Aorta (tissue), 5 donors: ENCODE measurements at regions of chr16 and their contacts with region 1.

Region 1: GRCh38 chr16:87196149-87196548 is 121.0 kb downstream of the C16orf95 start:
- DNase-seq: no peak
- ATAC-seq: no peak
- H3K4me3 ChIP-seq: no peak overlapping the region
- H3K27ac ChIP-seq: no peak overlapping the region
- H3K4me1 ChIP-seq: no peaks in the 10 kb centered on the region
- H3K27me3 ChIP-seq: no peaks in the 10 kb centered on the region

Region 2: GRCh38 chr16:87127061-87127739 is 68.9 kb before region 1 on chr16:
- intact Hi-C with region 1: no loop called
- DNase-seq: peak; percentile 76 to 87
- ATAC-seq: peak; percentile 56
- H3K4me3 ChIP-seq: no peak overlapping the region
- H3K27ac ChIP-seq: peak overlapping the region; percentile 41 to 100
- H3K4me1 ChIP-seq: no peaks in the 10 kb centered on the region
- H3K27me3 ChIP-seq: no peaks in the 10 kb centered on the region

Region 3: GRCh38 chr16:87145181-87146176 is 50.7 kb before region 1 on chr16:
- intact Hi-C with region 1: no loop called
- DNase-seq: peak in 1 of 2 donors; percentile 37
- ATAC-seq: no peak
- H3K4me3 ChIP-seq: no peak overlapping the region
- H3K27ac ChIP-seq: no peak overlapping the region
- H3K4me1 ChIP-seq: no peaks in the 10 kb centered on the region
- H3K27me3 ChIP-seq: no peaks in the 10 kb centered on the region

Region 4: DNA sequence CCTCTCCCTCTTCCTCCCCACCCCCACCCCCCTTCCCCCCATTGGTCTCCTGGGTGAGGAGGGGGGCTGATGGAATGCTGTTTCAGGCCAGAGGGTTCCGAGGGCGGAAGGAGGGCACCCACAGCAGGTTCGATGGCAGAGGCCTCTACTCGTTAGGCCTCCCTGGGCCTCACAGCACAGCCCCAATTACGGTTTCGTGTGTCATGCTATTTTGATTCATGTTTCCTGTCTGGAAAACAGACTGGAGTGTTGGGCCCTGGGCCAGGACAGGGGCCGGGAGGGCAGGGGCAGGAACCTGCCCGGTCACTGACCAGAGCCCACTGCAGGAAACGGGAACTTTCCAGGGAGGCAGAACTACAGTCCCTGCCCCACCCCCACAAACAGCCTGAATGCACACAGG is 17.2 kb before region 1 on chr16:
- intact Hi-C with region 1: loop called in 1 of 2 experiments (anchors 1 kb)
- DNase-seq: peak; percentile 88 to 89
- ATAC-seq: peak; percentile 62
- H3K4me3 ChIP-seq: no peak overlapping the region
- H3K27ac ChIP-seq: no peak overlapping the region
- H3K4me1 ChIP-seq: no peaks in the 10 kb centered on the region
- H3K27me3 ChIP-seq: no peaks in the 10 kb centered on the region